ENCODE measurements at regions of chr19 and their contacts with region 1.

Region 1: GRCh38 chr19:6167115-6167514 is 31.6 kb downstream of the ACSBG2 start:
- DNase-seq: no peak
- ATAC-seq: no peak
- H3K4me3 ChIP-seq: no peak overlapping the region
- H3K27ac ChIP-seq: no peak overlapping the region
- H3K4me1 ChIP-seq: no peaks in the 10 kb centered on the region
- H3K27me3 ChIP-seq: no peaks in the 10 kb centered on the region
- CTCF ChIP-seq: no peak
- EP300 ChIP-seq: no peak
- POLR2A ChIP-seq: no peak
- RAD21 ChIP-seq: no peak

Region 2: DNA sequence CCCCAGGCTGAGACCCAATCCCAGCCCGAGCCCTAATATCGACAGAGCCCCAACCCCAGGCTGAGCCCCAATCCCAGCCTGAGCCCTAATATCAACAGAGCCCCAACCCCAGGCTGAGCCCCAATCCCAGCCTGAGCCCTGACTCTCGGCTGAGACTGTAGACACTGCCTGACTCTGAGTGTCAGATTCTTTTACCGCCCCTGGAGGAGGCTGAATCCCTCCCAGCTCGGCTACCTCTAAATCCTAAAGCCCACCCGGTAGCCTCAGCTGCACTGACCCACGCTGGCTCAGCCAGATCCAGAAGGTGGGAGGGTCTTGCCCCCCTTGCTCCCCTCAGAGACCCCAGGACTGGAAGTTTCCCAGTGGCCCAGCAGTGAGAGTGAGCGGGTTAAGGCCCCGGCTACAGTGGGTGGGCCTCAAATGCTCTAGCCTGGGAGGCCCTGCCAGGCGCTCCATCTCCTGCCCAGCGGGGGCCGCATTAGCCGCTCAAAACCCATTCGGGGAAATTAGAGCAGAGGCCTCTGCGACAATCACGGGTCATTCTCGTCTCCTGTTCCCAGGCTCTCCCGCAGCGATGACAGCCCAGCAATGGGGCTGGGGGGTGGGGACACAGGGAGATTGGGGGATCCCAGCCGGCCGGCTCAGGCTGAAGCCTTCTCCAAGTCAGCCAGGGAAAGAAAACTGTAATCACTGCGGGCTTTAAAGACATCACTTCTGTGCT is 668.1 kb before region 1 on chr19:
- CTCF ChIA-PET with region 1: no interaction called
- POLR2A ChIA-PET with region 1: no interaction called
- RAD21 ChIA-PET with region 1: no interaction called
- SMC1A ChIA-PET with region 1: no interaction called
- in situ Hi-C with region 1: no loop called
- intact Hi-C with region 1: no loop called
- DNase-seq: no peak
- ATAC-seq: no peak
- H3K4me3 ChIP-seq: no peak overlapping the region
- H3K27ac ChIP-seq: no peak overlapping the region
- H3K4me1 ChIP-seq: no peaks in the 10 kb centered on the region
- H3K27me3 ChIP-seq: no peaks in the 10 kb centered on the region; a peak in 1 of 4 replicates
- CTCF ChIP-seq: no peak
- EP300 ChIP-seq: no peak
- POLR2A ChIP-seq: no peak
- RAD21 ChIP-seq: no peak

Region 3: DNA sequence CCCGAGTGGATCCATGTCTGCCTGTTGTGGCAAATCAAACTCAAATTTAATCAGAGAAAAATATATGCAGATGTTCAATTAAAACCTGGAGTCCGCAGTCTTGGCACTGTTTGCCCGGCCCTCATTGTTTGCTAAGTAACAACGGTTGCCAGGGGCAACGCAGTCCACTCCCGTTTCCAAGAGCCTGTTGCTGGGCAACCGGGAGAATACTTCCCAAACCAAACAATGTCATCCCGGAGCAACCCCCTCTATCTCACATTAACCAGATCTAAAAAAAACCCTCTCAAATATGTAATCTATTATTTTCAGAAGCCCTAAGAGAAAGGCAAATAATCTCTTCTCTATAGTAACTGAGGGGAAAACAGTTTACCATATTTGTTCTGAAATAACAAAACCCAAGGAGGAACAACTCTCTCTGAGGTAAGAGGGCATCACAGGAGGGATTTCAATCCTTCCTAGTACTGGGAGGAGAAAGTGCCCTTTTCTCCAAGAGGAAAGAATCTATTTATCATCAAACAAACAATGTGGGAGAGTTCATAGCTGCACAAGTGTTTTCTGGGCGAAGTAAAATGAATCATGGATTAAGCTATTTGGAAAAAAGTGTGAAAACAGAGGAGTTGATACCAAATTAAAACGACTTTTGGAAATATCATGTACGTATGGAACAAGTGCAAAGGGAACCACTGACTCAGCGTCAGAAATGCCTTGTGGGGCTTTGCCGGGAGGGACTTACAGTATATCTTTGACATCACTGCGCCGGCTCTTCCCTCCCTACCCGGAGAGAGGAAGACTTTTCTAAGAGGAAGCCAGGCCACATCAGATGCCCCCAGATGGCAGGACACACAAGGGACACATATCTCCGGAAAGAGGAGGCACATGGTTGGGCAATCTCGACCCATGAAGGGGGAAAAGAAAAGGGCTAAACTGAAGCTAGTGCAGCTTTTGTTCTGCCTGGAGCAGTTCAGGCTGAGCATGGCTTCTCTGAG is 100.2 kb before region 1 on chr19:
- CTCF ChIA-PET with region 1: no interaction called
- POLR2A ChIA-PET with region 1: no interaction called
- RAD21 ChIA-PET with region 1: no interaction called
- SMC1A ChIA-PET with region 1: no interaction called
- in situ Hi-C with region 1: no loop called
- intact Hi-C with region 1: no loop called
- DNase-seq: no peak
- ATAC-seq: peak; percentile 53
- H3K4me3 ChIP-seq: no peak overlapping the region
- H3K27ac ChIP-seq: no peak overlapping the region
- H3K4me1 ChIP-seq: no peaks in the 10 kb centered on the region
- H3K27me3 ChIP-seq: no peaks in the 10 kb centered on the region
- CTCF ChIP-seq: no peak
- EP300 ChIP-seq: peak in 1 of 2 experiments; percentile 86; a peak in 2 of 4 replicates
- POLR2A ChIP-seq: no peak
- RAD21 ChIP-seq: no peak

Region 4: GRCh38 chr19:6199240-6199983 is 32.3 kb after region 1 on chr19:
- CTCF ChIA-PET with region 1: interaction called, 4 read pairs
- POLR2A ChIA-PET with region 1: no interaction called
- RAD21 ChIA-PET with region 1: no interaction called
- SMC1A ChIA-PET with region 1: no interaction called
- in situ Hi-C with region 1: no loop called
- intact Hi-C with region 1: loop called (anchors 2 kb)
- DNase-seq: peak; percentile 95
- ATAC-seq: peak; percentile 91
- H3K4me3 ChIP-seq: peak overlapping the region; percentile 79
- H3K27ac ChIP-seq: peak overlapping the region; percentile 78
- H3K4me1 ChIP-seq: peaks cover 18% of the 10 kb centered on the region
- H3K27me3 ChIP-seq: no peaks in the 10 kb centered on the region
- CTCF ChIP-seq: peak in 2 of 3 experiments; percentile 31 to 37; a peak in 2 of 6 replicates
- EP300 ChIP-seq: no peak
- POLR2A ChIP-seq: peak; percentile 92
- RAD21 ChIP-seq: no peak

Measured in GM12878 (cell line).